ENCODE measurements at regions of chr18 and their contacts with region 1.

Region 1: DNA sequence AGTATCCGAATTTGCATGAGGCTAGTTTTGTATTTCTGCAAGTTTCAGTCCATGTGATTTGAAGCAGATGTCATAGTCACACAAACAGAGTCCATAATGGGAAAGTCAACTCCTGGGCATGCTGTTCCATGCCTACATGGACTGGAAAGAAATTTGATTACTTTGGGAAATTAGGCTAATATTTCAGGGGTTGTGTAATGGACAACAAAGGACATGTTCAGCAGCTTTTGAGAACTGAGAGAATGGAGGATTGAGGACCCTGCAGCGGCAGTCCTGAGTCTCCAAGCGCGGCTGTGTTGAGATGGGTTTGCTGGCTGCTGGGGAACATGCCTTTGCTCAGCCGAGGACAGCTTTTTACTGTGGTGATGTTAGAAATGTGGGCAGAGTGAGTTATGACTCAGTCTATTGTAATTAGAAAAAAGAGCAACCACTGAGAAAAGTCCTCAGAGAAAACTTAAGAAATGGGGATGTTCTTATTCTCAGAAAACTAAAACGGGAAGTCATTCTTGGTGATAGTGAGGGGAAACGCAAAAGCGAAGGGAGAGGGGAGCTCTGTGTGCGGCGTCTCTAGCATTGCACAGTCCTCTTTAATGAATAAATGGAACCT is 149.2 kb downstream of the FAM210A start:
- DNase-seq: no peak
- ATAC-seq: peak; percentile 80

Region 2: GRCh38 chr18:12408247-12408869 is 1168.8 kb before region 1 on chr18:
- intact Hi-C with region 1: loop called (anchors 10 kb)
- DNase-seq: peak; percentile 68
- ATAC-seq: peak; percentile 21

Region 3: DNA sequence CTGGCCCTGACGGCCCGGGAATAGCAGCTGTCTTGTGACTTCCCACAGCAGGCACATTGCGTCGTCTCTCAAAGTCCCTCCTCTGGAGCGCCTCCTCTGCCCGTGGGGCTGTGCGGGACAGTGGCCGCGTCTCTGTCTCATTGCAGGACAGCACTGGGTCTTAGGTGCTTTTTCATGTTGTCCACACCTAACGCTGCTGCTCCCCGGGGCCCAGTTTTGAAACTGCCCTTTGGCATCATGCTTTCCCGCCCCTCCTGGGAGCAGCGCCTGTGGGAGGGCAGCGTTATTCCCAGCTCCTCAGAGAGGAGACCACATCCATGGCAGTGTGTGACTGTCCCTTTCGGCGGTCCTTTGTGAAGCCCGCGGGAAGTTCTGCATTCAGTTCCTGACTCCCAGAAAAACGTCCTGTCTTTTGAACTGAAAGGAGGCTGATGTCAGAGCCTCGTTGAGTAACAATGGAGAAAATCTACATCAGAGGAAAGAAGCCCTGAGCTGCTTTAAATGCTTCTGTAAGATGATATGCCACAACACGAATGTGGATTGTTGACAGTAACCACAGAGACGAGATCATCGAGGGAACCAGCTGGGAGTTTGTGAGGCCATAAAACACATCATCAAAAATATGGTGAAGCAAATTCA is 76.8 kb before region 1 on chr18:
- intact Hi-C with region 1: no loop called
- DNase-seq: no peak
- ATAC-seq: peak; percentile 82